A673 (cell line): ENCODE measurements at regions of chr2 and their contacts with region 1.

Region 1: DNA sequence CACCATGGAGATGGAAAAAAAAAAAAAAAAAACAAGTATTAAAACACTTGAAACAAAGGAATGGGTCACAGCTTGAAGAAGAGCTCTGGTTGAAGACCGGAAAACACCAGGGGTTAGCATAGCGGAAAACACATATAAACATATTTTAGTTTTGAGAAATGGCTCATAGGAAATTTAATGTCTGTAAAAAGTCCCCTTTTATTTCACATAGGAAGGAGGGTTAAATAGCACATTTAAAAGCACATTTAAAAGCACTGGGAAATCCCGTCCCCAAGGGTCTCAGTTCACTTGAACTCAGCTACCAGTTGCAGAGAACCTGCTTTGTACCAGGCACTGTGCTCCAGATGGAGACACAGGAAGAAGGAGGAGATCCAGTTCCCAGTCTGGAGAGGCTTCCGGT is 65.5 kb downstream of the KCNE4 start:
- DNase-seq: peak; percentile 98
- H3K4me3 ChIP-seq: no peak overlapping the region
- H3K27ac ChIP-seq: peak overlapping the region; percentile 79
- H3K4me1 ChIP-seq: peaks cover 93% of the 10 kb centered on the region
- H3K27me3 ChIP-seq: no peaks in the 10 kb centered on the region
- CTCF ChIP-seq: no peak

Region 2: GRCh38 chr2:223051693-223052289 is 65.7 kb before region 1 on chr2 and contains the start of gene KCNE4:
- CTCF ChIA-PET with region 1: interaction called, 7 read pairs
- POLR2A ChIA-PET with region 1: no interaction called
- intact Hi-C with region 1: loop called (anchors 2 kb)
- DNase-seq: peak; percentile 91
- H3K4me3 ChIP-seq: peak within 1 kb of the TSS; percentile 69
- H3K27ac ChIP-seq: peak within 1 kb of the TSS; percentile 94
- H3K4me1 ChIP-seq: peaks cover 60% of the 10 kb centered on the region
- H3K27me3 ChIP-seq: no peaks in the 10 kb centered on the region
- CTCF ChIP-seq: no peak
- total RNA-seq, gene KCNE4: 68.0 and 82.5 TPM in 2 replicates

Region 3: GRCh38 chr2:223169830-223170605 is 52.5 kb after region 1 on chr2:
- CTCF ChIA-PET with region 1: no interaction called
- POLR2A ChIA-PET with region 1: interaction called, 22 read pairs
- intact Hi-C with region 1: no loop called
- DNase-seq: peak; percentile 25
- H3K4me3 ChIP-seq: no peak overlapping the region
- H3K27ac ChIP-seq: no peak overlapping the region
- H3K4me1 ChIP-seq: peaks cover 13% of the 10 kb centered on the region
- H3K27me3 ChIP-seq: no peaks in the 10 kb centered on the region
- CTCF ChIP-seq: no peak

Region 4: DNA sequence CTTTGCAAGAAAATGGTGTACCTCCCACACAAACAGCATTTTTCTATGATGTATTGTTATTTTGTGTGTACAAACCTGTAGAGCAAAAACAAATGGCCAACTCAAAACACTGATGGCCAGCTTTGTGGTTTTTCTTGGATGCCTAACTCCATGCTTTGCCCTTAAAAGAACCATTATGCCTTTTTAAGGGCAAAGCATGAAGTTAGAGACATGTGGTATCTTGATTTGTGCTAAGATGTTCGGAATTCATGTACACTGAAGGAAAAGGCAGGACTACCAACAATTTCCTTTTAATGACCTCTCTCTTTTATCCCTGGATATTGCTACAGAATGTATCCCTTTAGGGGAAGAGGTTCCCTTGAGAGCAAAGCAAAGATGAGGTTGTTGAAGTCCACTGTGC is 211.0 kb after region 1 on chr2:
- CTCF ChIA-PET with region 1: no interaction called
- POLR2A ChIA-PET with region 1: no interaction called
- intact Hi-C with region 1: no loop called
- DNase-seq: no peak
- H3K4me3 ChIP-seq: no peak overlapping the region
- H3K27ac ChIP-seq: no peak overlapping the region
- H3K4me1 ChIP-seq: peaks cover 5% of the 10 kb centered on the region
- H3K27me3 ChIP-seq: no peaks in the 10 kb centered on the region
- CTCF ChIP-seq: no peak

Region 5: GRCh38 chr2:223744573-223744972 is 627.0 kb after region 1 on chr2:
- CTCF ChIA-PET with region 1: no interaction called
- POLR2A ChIA-PET with region 1: no interaction called
- intact Hi-C with region 1: loop called (anchors 2 kb)
- DNase-seq: no peak
- H3K4me3 ChIP-seq: no peak overlapping the region
- H3K27ac ChIP-seq: peak overlapping the region; percentile 96
- H3K4me1 ChIP-seq: peaks cover 48% of the 10 kb centered on the region
- H3K27me3 ChIP-seq: no peaks in the 10 kb centered on the region
- CTCF ChIP-seq: no peak